Lower lobe of right lung (tissue), 2 donors: ENCODE measurements at regions of chr17 and their contacts with region 1.

Region 1: DNA sequence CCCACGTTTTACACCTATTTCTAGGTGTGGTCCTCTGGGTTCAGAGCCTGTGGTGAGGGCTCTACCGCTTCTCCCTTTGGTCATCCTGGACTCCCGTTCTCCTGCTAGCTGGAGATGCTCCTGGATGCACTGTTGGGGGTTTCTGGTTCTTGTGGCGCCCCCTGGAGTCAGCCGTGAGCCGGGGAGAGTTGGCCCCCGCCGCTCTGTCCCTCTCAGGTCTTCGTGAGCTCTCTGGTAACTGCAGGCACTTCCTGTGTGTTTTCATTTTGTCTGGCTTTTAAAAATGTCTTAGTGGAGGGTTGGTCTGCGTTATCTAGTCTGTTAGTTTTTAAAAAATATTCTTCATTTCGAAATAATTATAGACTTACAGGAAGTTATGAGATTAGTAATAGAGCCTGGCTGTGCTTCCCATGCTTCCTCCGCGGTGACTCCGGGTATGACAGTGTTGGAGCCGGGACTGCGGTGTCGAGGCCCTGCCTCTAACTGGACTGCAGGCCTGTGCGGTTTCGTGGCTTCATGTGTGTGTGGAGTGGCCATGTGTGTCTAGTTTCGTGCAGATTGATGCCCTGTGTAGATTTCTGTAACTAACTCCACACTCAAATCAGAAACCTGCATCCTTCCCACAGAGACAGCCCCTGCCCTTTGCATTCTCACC is 78.0 kb upstream of the ZNF750 start:
- DNase-seq: no peak
- ATAC-seq: peak in 1 of 2 donors; percentile 12
- H3K4me3 ChIP-seq: no peak overlapping the region
- H3K27ac ChIP-seq: no peak overlapping the region
- H3K4me1 ChIP-seq: no peaks in the 10 kb centered on the region
- H3K27me3 ChIP-seq: no peaks in the 10 kb centered on the region
- CTCF ChIP-seq: peak; percentile 49

Region 2: DNA sequence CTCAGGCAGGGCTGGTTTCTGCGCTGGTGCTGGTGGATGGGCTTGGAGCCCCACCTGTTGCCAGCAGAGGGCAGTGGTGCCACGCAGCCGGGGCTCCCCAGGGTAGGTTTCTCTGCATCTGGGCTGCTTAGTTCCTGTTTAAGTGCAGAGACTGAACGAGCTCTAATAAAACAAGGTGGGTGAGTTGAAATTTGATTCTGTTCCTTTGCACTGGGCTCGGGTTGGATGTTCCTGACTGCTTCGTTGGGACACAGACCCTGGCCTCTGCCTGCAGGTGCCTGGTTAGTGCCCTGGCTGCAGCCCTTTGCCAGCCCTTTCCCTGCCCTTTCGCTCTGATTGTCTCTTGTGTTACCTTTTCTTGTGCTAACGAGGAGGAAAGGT is 135.9 kb before region 1 on chr17:
- intact Hi-C with region 1: loop called (anchors 10 kb)
- DNase-seq: peak; percentile 89
- ATAC-seq: peak; percentile 96 to 98
- H3K4me3 ChIP-seq: no peak overlapping the region
- H3K27ac ChIP-seq: peak overlapping the region; percentile 59
- H3K4me1 ChIP-seq: peaks cover 7% of the 10 kb centered on the region
- H3K27me3 ChIP-seq: no peaks in the 10 kb centered on the region
- CTCF ChIP-seq: peak; percentile 98

Region 3: DNA sequence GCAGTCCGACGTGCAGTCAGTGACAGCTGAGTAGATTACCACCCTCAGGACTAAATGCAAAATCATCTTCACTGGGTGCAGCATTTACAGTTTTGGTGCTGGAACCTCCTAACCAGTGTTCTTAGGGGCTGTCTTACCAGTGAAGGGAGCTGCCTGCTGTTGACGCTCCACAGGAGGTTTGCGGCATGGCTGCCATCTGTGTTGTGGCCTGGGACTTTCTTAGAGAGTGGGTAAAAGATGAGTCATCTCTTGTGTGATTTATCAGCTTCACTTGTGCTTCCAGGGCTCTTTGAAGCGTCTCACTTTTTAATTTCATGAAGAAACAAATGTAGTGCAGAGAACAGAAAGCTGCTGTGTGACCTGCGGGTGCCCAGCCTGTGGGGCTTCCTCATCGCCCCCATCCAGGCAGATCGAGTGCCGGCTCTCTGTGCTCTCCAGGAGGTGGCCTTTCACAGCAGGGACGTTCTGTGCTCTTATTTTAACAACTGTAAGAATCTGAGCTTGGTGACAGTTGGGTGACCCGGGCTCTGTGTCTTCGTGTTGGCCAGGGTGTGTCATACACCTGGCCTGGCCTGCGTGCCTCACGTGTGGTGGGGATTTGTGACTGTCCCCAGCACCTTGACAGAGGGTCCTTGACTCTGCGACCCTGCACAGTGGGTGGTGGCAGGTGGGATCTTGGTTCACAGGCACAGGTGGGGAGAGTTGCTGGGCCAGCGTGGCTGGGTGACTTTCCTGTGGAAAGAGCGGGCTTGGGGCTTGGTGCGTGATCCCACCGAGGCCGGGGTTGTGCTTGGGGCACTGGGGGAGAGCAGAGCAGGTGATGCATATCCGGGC is 53.7 kb before region 1 on chr17:
- intact Hi-C with region 1: no loop called
- DNase-seq: no peak
- ATAC-seq: peak; percentile 42 to 45
- H3K4me3 ChIP-seq: no peak overlapping the region
- H3K27ac ChIP-seq: peak overlapping the region; percentile 64
- H3K4me1 ChIP-seq: peaks cover 28% of the 10 kb centered on the region
- H3K27me3 ChIP-seq: no peaks in the 10 kb centered on the region
- CTCF ChIP-seq: no peak